ENCODE measurements at regions of chr9 and their contacts with region 1.

Region 1: DNA sequence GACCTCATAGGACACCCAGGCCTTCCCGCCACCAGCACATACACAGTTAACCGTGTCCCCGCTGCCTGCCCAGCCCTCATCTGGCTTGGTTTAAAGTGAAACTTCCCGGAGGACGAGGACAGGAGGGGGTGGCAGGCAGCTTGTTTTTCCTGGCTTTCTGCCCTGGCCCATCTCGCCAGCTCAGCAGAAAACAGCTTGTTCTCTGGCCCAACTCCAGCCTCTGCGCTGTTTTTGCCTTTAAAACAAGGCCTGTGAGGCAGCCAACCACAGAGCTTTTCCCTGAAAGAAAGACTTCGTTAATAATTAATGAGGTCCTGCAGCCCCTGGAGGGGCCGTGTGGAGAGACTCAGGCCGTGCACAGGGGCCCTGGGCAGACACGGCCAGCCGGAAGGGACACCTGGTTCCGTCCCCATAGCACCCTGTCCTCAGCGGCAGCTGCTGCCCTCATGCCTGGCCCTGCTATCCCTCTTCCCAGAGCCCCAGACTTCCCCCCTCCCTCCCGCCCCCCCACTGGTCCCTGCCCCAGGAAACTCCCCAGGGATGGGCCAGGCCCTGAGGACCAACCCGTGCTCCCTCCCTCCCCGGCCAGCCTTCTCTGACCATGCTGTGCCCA is 108.7 kb downstream of the RXRA start:
- DNase-seq: peak; percentile 89 to 96 (median 94)
- H3K4me3 ChIP-seq: peak overlapping the region in 52 of 59 donors; percentile 4 to 63 (median 38)
- H3K27ac ChIP-seq: peak overlapping the region; percentile 67 to 99 (median 95)
- H3K27me3 ChIP-seq: no peaks in the 10 kb centered on the region
- CTCF ChIP-seq: peak in 11 of 56 donors; percentile 5 to 34 (median 14)

Region 2: DNA sequence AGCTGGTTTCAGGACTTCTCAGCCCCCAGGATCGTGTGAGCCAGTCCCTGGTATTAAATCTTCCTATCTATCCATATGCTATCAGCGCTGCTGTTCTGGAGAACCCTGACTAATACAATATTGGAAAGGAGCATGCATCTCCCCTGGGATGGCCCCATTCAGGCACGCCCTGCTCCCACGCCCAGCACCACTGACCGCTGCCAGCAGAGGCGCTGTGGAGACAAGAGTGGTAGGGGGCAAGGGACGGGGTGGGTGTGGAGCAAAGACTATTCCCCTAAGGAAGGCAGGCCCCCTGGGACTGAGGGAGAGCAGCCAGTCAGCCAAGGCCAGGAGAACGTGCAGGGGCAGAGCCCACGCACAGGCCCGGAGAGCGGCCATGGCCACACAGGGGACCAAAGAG is 558.9 kb before region 1 on chr9:
- intact Hi-C with region 1: no loop called
- DNase-seq: no peak
- H3K4me3 ChIP-seq: no peak overlapping the region
- H3K27ac ChIP-seq: no peak overlapping the region
- H3K27me3 ChIP-seq: no peaks in the 10 kb centered on the region
- CTCF ChIP-seq: no peak

Region 3: DNA sequence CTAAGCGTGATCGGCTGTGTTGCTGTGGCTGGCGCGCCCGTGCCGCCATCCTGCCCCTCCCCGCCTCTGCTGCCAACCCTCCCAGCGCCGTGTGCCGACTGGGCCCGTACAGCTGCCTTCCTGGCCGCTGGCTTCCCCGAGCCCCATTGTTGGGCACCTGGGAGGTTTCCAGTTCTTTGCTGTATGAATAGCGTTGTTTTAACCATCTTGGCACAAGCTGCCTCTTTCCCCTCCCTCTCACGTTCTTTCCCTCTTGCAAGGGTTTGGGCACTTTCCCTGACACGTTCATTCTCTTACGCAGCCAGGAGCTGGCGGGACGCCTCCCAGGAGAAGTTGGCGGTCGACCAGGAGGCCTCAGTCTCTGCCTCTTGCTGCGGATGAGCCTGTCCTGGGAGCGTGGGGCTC is 151.9 kb before region 1 on chr9:
- intact Hi-C with region 1: loop called in 1 of 2 experiments (anchors 5 kb)
- DNase-seq: peak; percentile 23 to 80 (median 68)
- H3K4me3 ChIP-seq: peak overlapping the region in 5 of 59 donors; percentile 2 to 22 (median 6)
- H3K27ac ChIP-seq: peak overlapping the region in 1 of 59 donors; percentile 18
- H3K27me3 ChIP-seq: no peaks in the 10 kb centered on the region
- CTCF ChIP-seq: no peak

Region 4: GRCh38 chr9:134325817-134326723 is 108.9 kb before region 1 on chr9 and contains the start of gene RXRA:
- intact Hi-C with region 1: loop called (anchors 2 kb)
- DNase-seq: peak in 9 of 10 donors; percentile 42 to 78 (median 57)
- H3K4me3 ChIP-seq: peak within 1 kb of the TSS; percentile 57 to 95 (median 76)
- H3K27ac ChIP-seq: peak within 1 kb of the TSS; percentile 18 to 96 (median 90)
- H3K27me3 ChIP-seq: no peaks in the 10 kb centered on the region
- CTCF ChIP-seq: peak in 15 of 56 donors; percentile 7 to 32 (median 19)
- total RNA-seq, gene RXRA: 32.1 to 133 (median 55.1) TPM

Region 5: DNA sequence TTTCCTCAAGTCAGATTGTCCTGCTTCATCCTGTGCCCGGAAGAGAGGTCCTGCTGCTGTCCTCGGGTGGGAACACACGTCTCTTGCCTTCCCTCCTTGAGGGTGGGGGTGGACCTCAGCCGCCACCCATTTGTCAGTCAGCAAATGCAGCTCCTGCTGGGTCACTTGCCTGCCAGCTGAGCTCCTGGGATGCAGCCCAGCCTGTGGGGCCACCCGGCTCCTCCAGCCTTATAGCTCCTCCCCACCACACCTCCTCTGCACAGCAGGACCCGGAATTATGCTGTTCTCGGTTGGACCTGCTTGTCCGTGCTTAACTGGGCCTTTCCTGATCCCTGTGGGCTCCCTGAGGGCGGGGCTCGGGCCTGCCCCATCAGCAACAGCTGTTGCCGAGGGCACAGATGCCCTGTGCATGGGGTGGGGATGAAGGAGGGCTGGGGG is 56.1 kb before region 1 on chr9:
- intact Hi-C with region 1: loop called in 1 of 2 experiments (anchors 5 kb)
- DNase-seq: peak in 3 of 10 donors; percentile 64 to 68 (median 67)
- H3K4me3 ChIP-seq: peak overlapping the region in 5 of 59 donors; percentile 2 to 24 (median 9)
- H3K27ac ChIP-seq: peak overlapping the region in 49 of 59 donors; percentile 5 to 88 (median 60)
- H3K27me3 ChIP-seq: no peaks in the 10 kb centered on the region
- CTCF ChIP-seq: no peak

Region 6: DNA sequence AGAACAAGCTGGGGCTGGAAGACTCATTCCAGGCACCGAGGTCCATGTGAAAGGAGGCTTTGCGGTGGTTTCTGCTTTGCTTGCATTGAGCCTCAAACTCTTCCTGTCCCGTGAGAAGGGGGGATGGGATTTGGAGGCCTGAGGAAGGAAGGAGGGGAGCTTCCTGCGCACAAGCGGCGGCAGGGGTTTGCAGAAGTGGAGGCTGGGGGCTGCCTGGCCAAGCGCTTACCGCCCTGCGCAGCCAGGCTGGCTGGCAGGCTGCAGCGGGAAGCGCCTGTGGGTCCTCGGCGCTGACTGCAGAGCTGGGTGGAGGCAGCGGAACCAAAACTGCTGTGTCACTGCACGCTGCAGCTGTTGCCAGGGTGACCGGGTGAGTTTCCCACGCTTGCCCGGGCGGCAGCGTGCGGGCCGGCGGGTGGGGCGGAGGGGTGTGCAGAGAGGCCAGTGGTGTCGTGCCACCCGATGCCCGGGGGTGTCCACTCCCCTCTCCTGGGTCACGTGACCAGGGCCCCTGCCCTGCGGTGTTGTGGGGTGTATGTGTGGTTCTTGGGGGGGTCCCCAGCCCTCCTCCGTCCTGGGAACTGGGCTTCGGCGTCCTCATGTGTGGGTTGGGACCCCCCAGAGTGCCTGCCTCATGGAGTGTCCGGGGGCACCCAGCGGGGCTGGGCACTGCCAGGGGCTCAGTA is 27.7 kb before region 1 on chr9:
- intact Hi-C with region 1: loop called in 1 of 2 experiments (anchors 1 kb)
- DNase-seq: peak; percentile 54 to 96 (median 90)
- H3K4me3 ChIP-seq: peak overlapping the region; percentile 22 to 68 (median 48)
- H3K27ac ChIP-seq: peak overlapping the region; percentile 44 to 98 (median 88)
- H3K27me3 ChIP-seq: no peaks in the 10 kb centered on the region
- CTCF ChIP-seq: peak in 11 of 56 donors; percentile 8 to 49 (median 14)